ENCODE measurements at regions of chr1 and their contacts with region 1.

Region 1: GRCh38 chr1:9580942-9581341 is 7.8 kb upstream of the TMEM201 start:
- DNase-seq: no peak
- H3K4me3 ChIP-seq: no peak overlapping the region
- H3K27ac ChIP-seq: no peak overlapping the region
- H3K4me1 ChIP-seq: no peaks in the 10 kb centered on the region
- H3K27me3 ChIP-seq: no peaks in the 10 kb centered on the region
- CTCF ChIP-seq: no peak
- POLR2A ChIP-seq: no peak

Region 2: GRCh38 chr1:9539829-9540550 is 41.0 kb before region 1 on chr1:
- intact Hi-C with region 1: loop called (anchors 5 kb)
- DNase-seq: peak; percentile 50
- H3K4me3 ChIP-seq: peak overlapping the region; percentile 81 to 88
- H3K27ac ChIP-seq: peak overlapping the region; percentile 86 to 97
- H3K4me1 ChIP-seq: peaks cover 12% of the 10 kb centered on the region
- H3K27me3 ChIP-seq: no peaks in the 10 kb centered on the region
- CTCF ChIP-seq: no peak
- POLR2A ChIP-seq: no peak

Region 3: GRCh38 chr1:9721606-9722377 is 140.8 kb after region 1 on chr1:
- intact Hi-C with region 1: no loop called
- DNase-seq: no peak
- H3K4me3 ChIP-seq: no peak overlapping the region
- H3K27ac ChIP-seq: no peak overlapping the region
- H3K4me1 ChIP-seq: no peaks in the 10 kb centered on the region
- H3K27me3 ChIP-seq: no peaks in the 10 kb centered on the region
- CTCF ChIP-seq: peak in 3 of 4 experiments; percentile 40 to 56 (median 46)
- POLR2A ChIP-seq: no peak

Measured in prostate gland (tissue), 2 donors.